Lower lobe of right lung (tissue), 2 donors: ENCODE measurements at regions of chr1 and their contacts with region 1.

Region 1: GRCh38 chr1:78617615-78618026 is 2.6 kb upstream of the IFI44L start:
- DNase-seq: peak; percentile 46
- ATAC-seq: peak; percentile 84 to 93
- H3K4me3 ChIP-seq: no peak overlapping the region
- H3K27ac ChIP-seq: no peak overlapping the region
- H3K4me1 ChIP-seq: peaks cover 18% of the 10 kb centered on the region
- H3K27me3 ChIP-seq: no peaks in the 10 kb centered on the region
- CTCF ChIP-seq: peak; percentile 84

Region 2: GRCh38 chr1:78676347-78676982 is 58.8 kb after region 1 on chr1:
- intact Hi-C with region 1: loop called (anchors 5 kb)
- DNase-seq: no peak
- ATAC-seq: peak in 1 of 2 donors; percentile 68
- H3K4me3 ChIP-seq: no peak overlapping the region
- H3K27ac ChIP-seq: no peak overlapping the region
- H3K4me1 ChIP-seq: no peaks in the 10 kb centered on the region
- H3K27me3 ChIP-seq: no peaks in the 10 kb centered on the region
- CTCF ChIP-seq: peak; percentile 88